Activated CD4-positive, alpha-beta T cell treated with anti-CD3 and anti-CD28 coated beads, Interleukin-2, amount 10 ng/mL, durations not matched to agents 24 days and 14 days (primary cell): ENCODE measurements at regions of chr4 and their contacts with region 1.

Region 1: DNA sequence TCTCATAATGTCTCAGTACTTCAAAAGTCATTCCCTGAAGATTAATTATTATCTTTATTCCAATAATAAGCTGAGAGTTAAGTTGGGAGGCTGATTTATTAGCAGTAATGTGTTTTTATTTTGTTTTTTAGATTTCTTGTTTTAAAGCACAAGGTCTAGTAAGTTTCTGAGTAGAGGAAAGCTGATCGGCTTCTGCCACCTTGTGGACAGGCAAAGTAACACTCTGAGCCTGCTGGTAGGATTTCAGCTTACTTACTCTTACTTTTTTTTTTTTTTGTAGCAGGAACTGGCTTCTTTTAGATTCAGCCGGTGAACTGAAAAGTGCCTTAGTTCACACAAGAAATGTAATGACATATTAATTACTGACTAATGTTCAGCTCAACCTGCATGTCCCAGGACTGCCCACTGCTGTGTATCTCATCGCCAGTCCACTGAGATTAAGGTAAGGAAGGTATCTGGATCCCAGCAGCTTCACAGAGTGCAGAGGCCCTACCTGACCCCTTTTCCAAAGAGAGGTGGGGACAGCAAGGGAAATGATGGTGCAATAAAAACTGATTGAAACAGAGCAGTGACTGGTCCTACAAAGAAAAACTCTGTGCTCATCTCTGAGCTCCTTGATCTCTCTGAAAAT is 126.5 kb downstream of the ADGRA3 start:
- DNase-seq: peak; percentile 82
- H3K4me3 Mint-ChIP-seq: no peak overlapping the region
- H3K27ac Mint-ChIP-seq: no peak overlapping the region
- H3K4me1 Mint-ChIP-seq: peaks cover 8% of the 10 kb centered on the region
- H3K27me3 Mint-ChIP-seq: no peaks in the 10 kb centered on the region

Region 2: DNA sequence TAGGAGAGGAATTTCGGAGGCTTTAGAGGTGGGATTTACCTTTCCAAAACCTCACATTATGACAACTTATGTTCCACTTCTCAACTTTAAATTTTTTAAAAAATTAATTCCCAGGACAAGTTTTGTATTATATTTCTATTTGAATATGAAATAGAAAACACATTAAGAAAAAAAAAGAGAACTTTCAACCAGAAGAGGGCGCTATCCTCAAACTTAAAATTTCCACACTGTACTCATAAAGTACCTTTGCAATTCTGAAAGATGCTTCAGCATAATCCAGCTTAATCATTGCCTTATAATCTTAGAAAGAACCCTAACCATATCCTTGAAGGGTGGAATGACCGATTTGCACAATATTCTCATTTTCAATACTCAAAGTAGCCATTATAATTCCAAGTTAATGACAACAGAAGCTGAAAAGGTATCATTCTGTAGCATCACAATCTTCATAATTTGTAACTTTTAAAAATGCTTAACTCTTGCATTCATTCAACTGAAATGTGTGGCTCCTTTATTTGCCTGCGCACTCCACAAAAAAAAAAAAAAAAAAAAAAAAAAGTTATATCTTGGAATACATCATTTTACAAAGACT is 598.8 kb before region 1 on chr4:
- intact Hi-C with region 1: loop called (anchors 1 kb)
- DNase-seq: no peak
- H3K4me3 Mint-ChIP-seq: no peak overlapping the region
- H3K27ac Mint-ChIP-seq: no peak overlapping the region
- H3K4me1 Mint-ChIP-seq: no peaks in the 10 kb centered on the region
- H3K27me3 Mint-ChIP-seq: no peaks in the 10 kb centered on the region

Region 3: DNA sequence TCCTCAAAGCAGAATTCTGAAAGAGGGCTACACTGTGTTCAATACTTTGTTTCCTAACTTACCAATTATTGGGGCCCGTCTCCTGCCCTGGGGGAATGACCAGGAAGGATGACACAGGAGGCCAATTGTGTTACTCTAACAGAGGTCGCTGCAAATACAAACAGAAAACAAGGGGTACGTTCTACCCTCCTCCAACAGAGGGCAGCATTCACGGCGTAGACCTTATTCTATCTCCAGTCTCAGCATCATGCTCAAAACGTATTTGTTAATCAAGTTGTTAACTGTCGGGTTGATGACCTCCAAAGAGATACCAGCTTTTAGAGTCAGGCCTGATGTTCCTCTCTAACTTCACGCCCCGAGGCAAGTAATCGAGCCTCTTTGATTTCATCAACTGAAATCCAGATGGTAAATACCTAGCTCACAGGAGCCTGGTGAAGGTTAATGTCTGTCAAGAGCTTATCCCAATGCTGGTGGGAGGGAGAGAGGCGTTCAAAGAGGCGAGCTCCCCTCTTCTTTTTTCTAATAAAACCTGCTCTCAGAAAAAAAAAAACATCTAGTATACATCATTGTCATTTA is 259.8 kb before region 1 on chr4:
- intact Hi-C with region 1: loop called (anchors 1 kb)
- DNase-seq: peak; percentile 70
- H3K4me3 Mint-ChIP-seq: no peak overlapping the region
- H3K27ac Mint-ChIP-seq: no peak overlapping the region
- H3K4me1 Mint-ChIP-seq: no peaks in the 10 kb centered on the region
- H3K27me3 Mint-ChIP-seq: no peaks in the 10 kb centered on the region

Region 4: DNA sequence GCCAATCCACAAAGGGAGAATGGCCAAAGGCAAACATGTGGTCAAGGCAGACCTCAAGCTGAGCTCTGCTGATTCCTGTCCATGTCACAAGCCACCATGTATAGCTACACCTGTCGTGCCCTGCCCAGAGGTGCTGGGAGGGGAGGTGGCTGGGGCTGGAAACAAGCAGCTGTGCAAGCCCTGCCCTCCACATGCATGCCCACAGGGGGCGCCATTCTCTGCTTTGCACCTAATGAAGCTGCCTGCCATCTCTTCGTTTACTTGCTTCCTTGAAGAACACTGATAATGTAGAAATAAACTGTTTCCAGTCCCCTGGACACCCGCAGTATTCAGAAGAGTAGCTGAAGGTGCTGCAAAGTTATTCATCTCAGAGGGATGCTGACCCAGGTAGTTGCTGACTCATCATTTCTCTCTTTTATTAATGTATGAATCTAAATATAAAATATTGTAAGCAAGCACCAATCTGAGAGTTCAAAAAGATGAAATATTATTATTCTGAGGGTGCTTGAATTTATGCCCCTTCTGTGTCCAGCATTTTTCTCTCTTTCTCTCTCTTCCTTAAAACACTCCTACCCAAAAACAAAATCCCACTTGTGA is 152.1 kb before region 1 on chr4:
- intact Hi-C with region 1: loop called (anchors 1 kb)
- DNase-seq: peak; percentile 89
- H3K4me3 Mint-ChIP-seq: peak overlapping the region; percentile 74
- H3K27ac Mint-ChIP-seq: peak overlapping the region; percentile 45
- H3K4me1 Mint-ChIP-seq: peaks cover 28% of the 10 kb centered on the region
- H3K27me3 Mint-ChIP-seq: no peaks in the 10 kb centered on the region